Activated B cell treated with CpG ODN at 0.5 μM for 24 hours (primary cell): ENCODE measurements at regions of chr9 and their contacts with region 1.

Region 1: GRCh38 chr9:97386733-97387503 is 25.0 kb upstream of the TDRD7 start:
- DNase-seq: peak; percentile 76
- ATAC-seq: peak; percentile 53
- H3K4me3 Mint-ChIP-seq: no peak overlapping the region
- H3K27ac Mint-ChIP-seq: no peak overlapping the region
- H3K4me1 Mint-ChIP-seq: peaks cover 23% of the 10 kb centered on the region
- H3K27me3 Mint-ChIP-seq: peaks cover 4% of the 10 kb centered on the region
- CTCF ChIP-seq: peak; percentile 52

Region 2: GRCh38 chr9:96661711-96662110 is 725.2 kb before region 1 on chr9:
- CTCF ChIA-PET with region 1: no interaction called
- POLR2A ChIA-PET with region 1: no interaction called
- intact Hi-C with region 1: no loop called
- DNase-seq: no peak
- ATAC-seq: no peak
- H3K4me3 Mint-ChIP-seq: no peak overlapping the region
- H3K27ac Mint-ChIP-seq: no peak overlapping the region
- H3K4me1 Mint-ChIP-seq: peaks cover 3% of the 10 kb centered on the region
- H3K27me3 Mint-ChIP-seq: peaks cover 6% of the 10 kb centered on the region
- CTCF ChIP-seq: no peak

Region 3: DNA sequence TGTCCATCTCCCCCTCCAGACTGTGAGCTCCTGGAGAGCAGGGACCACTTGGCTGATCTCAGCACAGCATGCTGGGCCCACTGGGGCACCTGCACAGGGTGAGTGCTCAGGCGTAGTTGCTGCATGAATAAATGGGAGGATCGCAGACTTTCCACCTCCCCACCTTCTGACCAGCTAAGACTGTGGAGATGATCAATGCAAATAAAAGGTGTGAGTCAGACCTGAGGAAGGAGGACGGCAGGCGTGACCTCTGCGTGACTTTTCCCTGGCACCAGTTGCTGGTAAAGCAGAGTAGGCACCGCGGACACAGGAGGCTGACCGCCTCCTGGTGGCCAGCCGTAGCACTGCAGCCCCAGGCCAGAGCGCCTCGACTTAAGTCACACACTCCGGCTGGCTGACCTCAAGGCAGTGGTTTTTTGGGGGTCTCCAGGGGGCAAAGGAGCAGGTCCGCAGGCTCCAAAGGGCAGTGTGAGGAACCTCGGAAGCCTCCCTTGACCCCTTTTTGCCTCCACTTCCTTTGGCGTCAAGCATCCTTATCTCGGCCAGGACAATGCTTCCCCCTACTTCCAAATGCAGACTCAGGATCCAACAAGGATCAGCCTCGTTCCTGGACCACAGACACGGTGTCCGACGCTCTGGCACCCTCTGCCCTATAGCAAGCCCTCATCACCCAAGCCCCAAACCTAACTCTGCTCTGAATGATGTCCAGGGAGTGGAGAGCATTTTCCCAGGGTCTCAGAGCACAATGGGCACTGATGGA is 12.3 kb after region 1 on chr9:
- CTCF ChIA-PET with region 1: interaction called, 32 read pairs
- POLR2A ChIA-PET with region 1: no interaction called
- intact Hi-C with region 1: loop called (anchors 1 kb)
- DNase-seq: peak; percentile 68
- ATAC-seq: peak; percentile 97
- H3K4me3 Mint-ChIP-seq: no peak overlapping the region
- H3K27ac Mint-ChIP-seq: no peak overlapping the region
- H3K4me1 Mint-ChIP-seq: peaks cover 5% of the 10 kb centered on the region
- H3K27me3 Mint-ChIP-seq: peaks cover 4% of the 10 kb centered on the region
- CTCF ChIP-seq: no peak

Region 4: GRCh38 chr9:97615439-97616072 is 228.6 kb after region 1 on chr9:
- CTCF ChIA-PET with region 1: interaction called, 27 read pairs
- POLR2A ChIA-PET with region 1: no interaction called
- intact Hi-C with region 1: loop called (anchors 1 kb)
- DNase-seq: no peak
- ATAC-seq: peak; percentile 52
- H3K4me3 Mint-ChIP-seq: no peak overlapping the region
- H3K27ac Mint-ChIP-seq: no peak overlapping the region
- H3K4me1 Mint-ChIP-seq: peaks cover 12% of the 10 kb centered on the region
- H3K27me3 Mint-ChIP-seq: no peaks in the 10 kb centered on the region
- CTCF ChIP-seq: peak; percentile 77